A673 (cell line): ENCODE measurements at regions of chr3 and their contacts with region 1.

Region 1: GRCh38 chr3:156040041-156040440 is 80.3 kb upstream of the KCNAB1 start:
- DNase-seq: no peak
- H3K4me3 ChIP-seq: no peak overlapping the region
- H3K27ac ChIP-seq: no peak overlapping the region
- H3K4me1 ChIP-seq: no peaks in the 10 kb centered on the region
- H3K27me3 ChIP-seq: no peaks in the 10 kb centered on the region
- CTCF ChIP-seq: no peak

Region 2: GRCh38 chr3:156050918-156051317 is 10.9 kb after region 1 on chr3:
- CTCF ChIA-PET with region 1: interaction called, 11 read pairs
- POLR2A ChIA-PET with region 1: interaction called, 5 read pairs
- intact Hi-C with region 1: no loop called
- DNase-seq: no peak
- H3K4me3 ChIP-seq: no peak overlapping the region
- H3K27ac ChIP-seq: no peak overlapping the region
- H3K4me1 ChIP-seq: no peaks in the 10 kb centered on the region
- H3K27me3 ChIP-seq: no peaks in the 10 kb centered on the region
- CTCF ChIP-seq: no peak

Region 3: GRCh38 chr3:156135921-156136638 is 96.0 kb after region 1 on chr3:
- CTCF ChIA-PET with region 1: no interaction called
- POLR2A ChIA-PET with region 1: no interaction called
- intact Hi-C with region 1: loop called (anchors 5 kb)
- DNase-seq: peak; percentile 48
- H3K4me3 ChIP-seq: no peak overlapping the region
- H3K27ac ChIP-seq: no peak overlapping the region
- H3K4me1 ChIP-seq: no peaks in the 10 kb centered on the region
- H3K27me3 ChIP-seq: no peaks in the 10 kb centered on the region
- CTCF ChIP-seq: peak; percentile 59